PC-3 (cell line): ENCODE measurements at regions of chr13 and their contacts with region 1.

Region 1: GRCh38 chr13:89878904-89879303 is 1468.6 kb upstream of the MIR17HG start:
- DNase-seq: no peak
- ATAC-seq: no peak
- H3K4me3 ChIP-seq: no peak overlapping the region
- H3K27ac ChIP-seq: no peak overlapping the region
- H3K4me1 ChIP-seq: no peaks in the 10 kb centered on the region
- H3K27me3 ChIP-seq: no peaks in the 10 kb centered on the region
- CTCF ChIP-seq: no peak

Region 2: GRCh38 chr13:89686171-89686570 is 192.7 kb before region 1 on chr13:
- CTCF ChIA-PET with region 1: interaction called, 13 read pairs
- POLR2A ChIA-PET with region 1: no interaction called
- intact Hi-C with region 1: no loop called
- DNase-seq: no peak
- ATAC-seq: no peak
- H3K4me3 ChIP-seq: no peak overlapping the region
- H3K27ac ChIP-seq: no peak overlapping the region
- H3K4me1 ChIP-seq: no peaks in the 10 kb centered on the region
- H3K27me3 ChIP-seq: no peaks in the 10 kb centered on the region
- CTCF ChIP-seq: no peak

Region 3: DNA sequence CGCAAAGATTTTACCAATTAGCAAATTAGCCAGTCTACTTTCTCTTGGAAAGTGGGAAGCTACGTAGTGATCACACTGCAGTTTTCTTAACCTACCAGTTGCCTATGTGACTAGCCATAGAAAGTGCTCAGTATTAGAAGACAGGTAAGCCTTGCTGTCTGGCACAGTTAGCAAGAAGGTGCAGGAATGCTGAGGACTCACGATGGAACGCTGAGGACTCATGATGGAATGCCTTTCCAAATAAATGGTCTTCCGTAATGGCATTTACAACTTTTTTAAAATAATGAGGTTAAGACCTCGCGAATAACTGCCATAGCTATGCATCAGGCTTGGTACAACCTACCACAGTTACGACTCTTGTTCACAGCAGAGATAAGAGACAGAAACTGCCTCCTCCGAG is 177.0 kb before region 1 on chr13:
- CTCF ChIA-PET with region 1: no interaction called
- POLR2A ChIA-PET with region 1: no interaction called
- intact Hi-C with region 1: no loop called
- DNase-seq: no peak
- ATAC-seq: no peak
- H3K4me3 ChIP-seq: no peak overlapping the region
- H3K27ac ChIP-seq: no peak overlapping the region
- H3K4me1 ChIP-seq: no peaks in the 10 kb centered on the region
- H3K27me3 ChIP-seq: no peaks in the 10 kb centered on the region
- CTCF ChIP-seq: no peak

Region 4: DNA sequence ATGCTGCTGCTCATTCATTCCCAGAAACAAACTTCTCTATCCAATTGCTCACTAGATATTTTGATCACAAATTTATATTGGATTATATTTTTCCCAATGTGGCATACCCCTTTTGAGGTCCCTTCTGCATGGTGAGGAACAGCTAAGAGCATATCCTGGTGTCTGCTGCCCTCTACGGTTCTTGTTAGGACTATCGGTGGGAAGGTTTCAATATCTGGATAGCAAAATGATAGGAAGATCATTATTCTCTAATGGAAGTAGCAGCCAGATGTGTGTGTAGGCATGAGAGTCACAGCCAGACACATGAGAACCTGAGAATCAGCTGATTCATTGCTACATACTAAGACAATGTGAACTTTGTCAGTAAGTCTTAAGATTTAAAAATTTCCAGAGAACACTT is 46.2 kb after region 1 on chr13:
- CTCF ChIA-PET with region 1: no interaction called
- POLR2A ChIA-PET with region 1: no interaction called
- intact Hi-C with region 1: no loop called
- DNase-seq: peak; percentile 53
- ATAC-seq: peak; percentile 80
- H3K4me3 ChIP-seq: no peak overlapping the region
- H3K27ac ChIP-seq: no peak overlapping the region
- H3K4me1 ChIP-seq: no peaks in the 10 kb centered on the region; the same call in 1 of the 2 replicates
- H3K27me3 ChIP-seq: no peaks in the 10 kb centered on the region
- CTCF ChIP-seq: peak; percentile 79